ENCODE measurements at regions of chrX and their contacts with region 1.

Region 1: DNA sequence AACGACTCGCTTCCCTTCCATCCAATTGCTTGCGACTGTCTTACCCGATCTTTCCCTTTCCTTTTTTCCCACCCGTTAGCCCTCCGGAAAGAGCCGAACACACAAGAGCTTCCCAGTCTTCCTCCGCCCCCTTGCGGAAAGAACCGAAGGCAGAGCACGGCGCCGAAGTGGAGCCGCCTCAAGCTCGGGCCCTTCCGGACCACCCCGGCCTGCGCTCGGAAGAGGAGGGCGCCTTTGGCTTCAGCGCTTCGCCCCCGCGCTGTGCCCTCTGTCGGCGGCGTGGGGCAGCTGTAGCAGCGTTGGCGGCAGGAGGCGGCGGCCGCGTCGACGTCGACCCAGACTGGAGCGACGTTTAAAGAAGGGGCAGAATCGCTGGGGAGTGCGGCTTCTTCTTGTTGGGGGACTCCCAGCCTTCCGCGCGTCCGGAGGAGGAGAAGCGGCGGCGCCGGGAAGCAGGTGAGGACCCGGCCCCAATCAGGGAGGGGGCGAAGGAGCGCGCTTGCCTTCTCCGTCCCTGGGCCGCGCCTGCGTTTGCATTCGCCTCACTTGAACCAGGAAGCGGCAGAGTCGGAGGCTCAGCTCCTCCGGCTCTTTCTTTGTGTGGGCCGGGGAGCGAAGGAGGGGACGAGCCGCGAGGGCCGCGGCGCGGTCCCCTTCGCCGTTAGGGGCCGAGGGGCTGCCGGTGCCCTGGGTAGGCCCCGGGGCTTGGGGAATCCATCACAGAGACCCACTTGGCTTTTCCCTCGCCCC is at the start of gene ZBTB33:
- H3K4me3 Mint-ChIP-seq: peak within 1 kb of the TSS; percentile 99
- H3K27ac Mint-ChIP-seq: peak within 1 kb of the TSS; percentile 99
- H3K4me1 Mint-ChIP-seq: peaks cover 12% of the 10 kb centered on the region
- H3K27me3 Mint-ChIP-seq: no peaks in the 10 kb centered on the region

Region 2: GRCh38 chrX:120302434-120302833 is 51.7 kb after region 1 on chrX:
- intact Hi-C with region 1: loop called (anchors 5 kb)
- H3K4me3 Mint-ChIP-seq: no peak overlapping the region
- H3K27ac Mint-ChIP-seq: peak overlapping the region; percentile 67
- H3K4me1 Mint-ChIP-seq: peaks cover 43% of the 10 kb centered on the region
- H3K27me3 Mint-ChIP-seq: no peaks in the 10 kb centered on the region

Region 3: GRCh38 chrX:120428309-120428708 is 177.6 kb after region 1 on chrX:
- intact Hi-C with region 1: loop called (anchors 10 kb)
- H3K4me3 Mint-ChIP-seq: no peak overlapping the region
- H3K27ac Mint-ChIP-seq: no peak overlapping the region
- H3K4me1 Mint-ChIP-seq: peaks cover 15% of the 10 kb centered on the region
- H3K27me3 Mint-ChIP-seq: no peaks in the 10 kb centered on the region

Region 4: GRCh38 chrX:120468825-120469525 is 218.3 kb after region 1 on chrX and contains the start of gene LAMP2:
- intact Hi-C with region 1: loop called (anchors 2 kb)
- H3K4me3 Mint-ChIP-seq: peak within 1 kb of the TSS; percentile 95
- H3K27ac Mint-ChIP-seq: peak within 1 kb of the TSS; percentile 96
- H3K4me1 Mint-ChIP-seq: peaks cover 19% of the 10 kb centered on the region
- H3K27me3 Mint-ChIP-seq: no peaks in the 10 kb centered on the region

Measured in dendritic cell treated with granulocyte-macrophage colony-stimulating factor and Interleukin-4, amounts not matched to agents 40 ng/mL and 50 ng/mL, for 4 days (primary cell).